ENCODE measurements at regions of chr22 and their contacts with region 1.

Region 1: DNA sequence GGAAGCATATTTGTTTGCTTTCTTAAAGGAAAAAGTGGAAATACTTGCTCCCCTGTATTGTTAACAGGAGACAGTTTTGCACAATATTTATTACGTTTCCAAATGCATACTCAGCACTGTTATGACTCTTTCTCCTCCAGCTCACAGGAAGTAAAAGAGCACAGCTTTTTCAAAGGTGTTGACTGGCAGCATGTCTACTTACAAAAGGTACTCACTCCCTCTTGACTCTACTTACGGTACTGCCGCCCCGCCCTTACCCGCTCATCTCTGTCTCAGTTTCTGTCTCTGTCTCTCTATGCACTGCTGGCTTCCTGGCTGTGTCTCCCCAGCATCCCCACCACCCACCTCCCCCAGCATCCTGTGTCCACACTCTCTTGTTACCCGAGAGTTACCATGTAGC is 32.2 kb upstream of the MYO18B start:
- DNase-seq: no peak
- ATAC-seq: no peak
- H3K4me3 ChIP-seq: no peak overlapping the region
- H3K27ac ChIP-seq: no peak overlapping the region
- H3K4me1 ChIP-seq: peaks cover 19% of the 10 kb centered on the region
- H3K27me3 ChIP-seq: no peaks in the 10 kb centered on the region
- CTCF ChIP-seq: no peak

Region 2: GRCh38 chr22:25482868-25483639 is 226.7 kb before region 1 on chr22:
- intact Hi-C with region 1: loop called in 1 of 2 experiments (anchors 5 kb)
- DNase-seq: peak in 1 of 2 donors; percentile 58
- ATAC-seq: peak; percentile 57 to 87 (median 74)
- H3K4me3 ChIP-seq: no peak overlapping the region
- H3K27ac ChIP-seq: no peak overlapping the region
- H3K4me1 ChIP-seq: peaks cover 15% of the 10 kb centered on the region
- H3K27me3 ChIP-seq: no peaks in the 10 kb centered on the region
- CTCF ChIP-seq: no peak

Region 3: GRCh38 chr22:25602916-25603315 is 106.8 kb before region 1 on chr22:
- intact Hi-C with region 1: no loop called
- DNase-seq: no peak
- ATAC-seq: no peak
- H3K4me3 ChIP-seq: no peak overlapping the region
- H3K27ac ChIP-seq: no peak overlapping the region
- H3K4me1 ChIP-seq: no peaks in the 10 kb centered on the region
- H3K27me3 ChIP-seq: no peaks in the 10 kb centered on the region
- CTCF ChIP-seq: no peak